Activated CD4-positive, alpha-beta T cell treated with anti-CD3 and anti-CD28 coated beads for 36 hours (primary cell): ENCODE measurements at regions of chr9 and their contacts with region 1.

Region 1: GRCh38 chr9:35882263-35882848 is 12.2 kb upstream of the OR13J1 start:
- DNase-seq: peak; percentile 89
- ATAC-seq: peak; percentile 77
- H3K4me3 Mint-ChIP-seq: no peak overlapping the region
- H3K27ac Mint-ChIP-seq: no peak overlapping the region
- H3K4me1 Mint-ChIP-seq: no peaks in the 10 kb centered on the region
- H3K27me3 Mint-ChIP-seq: peaks cover 4% of the 10 kb centered on the region

Region 2: DNA sequence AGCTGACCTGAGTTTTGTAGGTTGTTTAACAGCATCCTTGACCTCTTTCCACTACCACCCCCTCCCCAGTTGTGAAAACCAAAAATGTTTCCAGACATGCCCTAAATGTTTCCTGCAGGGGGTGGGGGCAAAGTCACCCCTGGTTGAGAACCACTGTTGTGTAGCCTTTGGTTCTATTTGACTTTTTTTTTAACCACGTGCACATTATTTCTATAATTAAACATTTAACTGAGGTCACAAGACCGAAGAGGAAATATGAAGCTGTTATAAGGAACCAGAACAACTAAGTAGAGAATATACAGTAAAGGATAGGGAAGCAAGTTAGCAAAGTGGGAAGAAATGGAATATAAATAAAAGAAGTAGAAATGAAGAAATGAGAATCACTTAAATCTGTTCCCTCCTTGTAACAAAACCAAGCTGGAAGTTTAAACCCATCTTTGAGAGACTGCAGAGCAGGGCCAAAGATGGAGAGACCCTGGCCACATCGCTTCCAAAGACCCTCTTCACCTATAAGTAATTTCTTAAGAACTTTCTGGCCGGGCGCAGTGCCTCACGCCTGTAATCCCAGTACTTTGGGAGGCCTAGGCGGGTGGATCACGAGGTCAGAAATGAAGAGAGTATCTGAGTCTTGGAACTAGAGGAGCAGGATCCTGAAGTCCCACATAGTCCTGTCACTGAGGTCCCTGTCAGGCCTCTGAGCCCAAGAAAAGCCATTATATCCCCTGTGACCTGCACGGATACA is 246.1 kb before region 1 on chr9:
- CTCF ChIA-PET with region 1: no interaction called
- POLR2A ChIA-PET with region 1: no interaction called
- intact Hi-C with region 1: no loop called
- DNase-seq: no peak
- ATAC-seq: no peak
- H3K4me3 Mint-ChIP-seq: no peak overlapping the region
- H3K27ac Mint-ChIP-seq: no peak overlapping the region
- H3K4me1 Mint-ChIP-seq: peaks cover 47% of the 10 kb centered on the region
- H3K27me3 Mint-ChIP-seq: no peaks in the 10 kb centered on the region

Region 3: GRCh38 chr9:35680331-35681105 is 201.8 kb before region 1 on chr9:
- CTCF ChIA-PET with region 1: no interaction called
- POLR2A ChIA-PET with region 1: no interaction called
- intact Hi-C with region 1: no loop called
- DNase-seq: no peak
- ATAC-seq: no peak
- H3K4me3 Mint-ChIP-seq: no peak overlapping the region
- H3K27ac Mint-ChIP-seq: no peak overlapping the region
- H3K4me1 Mint-ChIP-seq: peaks cover 6% of the 10 kb centered on the region
- H3K27me3 Mint-ChIP-seq: peaks cover 4% of the 10 kb centered on the region

Region 4: DNA sequence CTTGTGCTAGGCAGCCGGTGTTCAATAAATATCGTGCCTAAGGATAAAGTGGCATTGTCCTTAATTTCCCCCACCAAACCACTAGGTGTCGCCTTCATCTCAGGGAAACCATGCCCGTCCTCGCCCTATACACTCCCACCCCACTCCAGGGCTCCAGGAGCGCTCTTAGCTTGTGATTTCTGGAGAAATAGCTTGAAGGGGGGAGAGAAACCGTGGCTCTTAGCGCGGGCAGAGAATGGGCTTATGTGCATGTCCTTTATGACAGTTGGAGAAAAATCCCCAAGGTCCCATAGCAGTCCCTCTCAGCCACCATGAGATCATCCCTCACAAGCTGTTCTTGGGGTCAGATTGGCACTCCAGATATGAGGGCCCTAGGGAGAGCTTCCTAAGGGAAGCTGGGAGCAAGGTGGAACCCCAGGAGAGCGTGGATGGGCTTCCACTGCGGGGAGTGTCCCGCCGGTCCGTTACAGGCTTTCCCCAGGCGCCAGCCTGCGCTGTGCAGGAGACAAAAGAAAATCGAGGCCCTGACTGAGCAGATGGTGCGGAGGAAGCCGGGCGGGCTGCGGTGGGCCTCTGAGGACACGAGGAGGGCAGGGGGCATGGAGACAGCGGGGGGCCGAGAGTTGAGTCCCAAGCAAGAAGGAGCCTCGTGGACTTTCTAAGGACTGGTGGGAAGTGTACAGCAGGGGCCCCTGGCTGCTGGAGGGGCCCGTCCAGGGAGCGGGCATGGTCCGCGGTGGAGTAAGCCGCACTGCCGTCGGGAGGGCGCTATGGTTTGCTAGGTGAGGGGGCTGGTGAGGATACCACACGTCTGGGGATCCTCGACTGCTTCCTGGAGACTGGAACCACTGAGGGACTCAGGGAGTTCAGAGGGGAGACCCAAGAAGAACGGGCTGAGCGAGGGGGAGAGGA is 91.7 kb before region 1 on chr9:
- CTCF ChIA-PET with region 1: interaction called, 50 read pairs
- POLR2A ChIA-PET with region 1: no interaction called
- intact Hi-C with region 1: loop called (anchors 1 kb)
- DNase-seq: peak; percentile 67
- ATAC-seq: peak; percentile 94
- H3K4me3 Mint-ChIP-seq: no peak overlapping the region
- H3K27ac Mint-ChIP-seq: no peak overlapping the region
- H3K4me1 Mint-ChIP-seq: peaks cover 3% of the 10 kb centered on the region
- H3K27me3 Mint-ChIP-seq: no peaks in the 10 kb centered on the region

Region 5: DNA sequence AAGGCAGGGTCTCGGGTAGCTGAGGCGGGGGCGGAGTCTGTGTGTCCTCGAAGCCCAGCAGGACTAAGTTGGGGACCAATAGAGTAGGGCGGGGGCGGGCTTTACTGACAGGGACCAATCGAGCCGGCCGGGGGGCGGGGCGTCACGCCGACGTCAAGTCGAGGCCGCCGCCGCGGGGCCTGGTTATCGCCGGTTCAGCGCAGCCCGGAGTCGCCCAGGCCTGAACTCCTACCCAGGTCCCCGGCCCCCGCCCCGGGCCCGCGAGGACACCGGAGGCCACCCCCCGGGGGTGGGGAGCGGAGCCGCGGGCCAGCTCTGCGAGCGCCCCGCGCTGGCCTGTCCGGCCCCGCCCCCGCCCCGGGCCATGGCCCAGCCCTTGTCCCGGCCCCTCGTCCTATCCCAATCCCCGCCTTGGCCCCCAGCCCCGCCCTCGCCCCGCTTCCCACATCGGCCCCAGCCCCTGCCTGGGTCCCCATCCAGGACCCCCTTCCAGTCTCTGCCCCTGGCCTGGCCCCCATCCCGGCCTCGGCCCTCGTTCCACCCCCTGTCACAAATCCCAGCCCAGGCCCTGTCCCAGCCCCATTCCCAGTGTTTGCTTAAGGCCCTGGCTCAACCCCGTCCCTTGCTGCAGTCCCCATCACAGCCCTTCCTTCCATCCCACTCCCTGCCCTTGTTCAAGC is 53.1 kb before region 1 on chr9 and contains the start of gene TMEM8B:
- CTCF ChIA-PET with region 1: interaction called, 27 read pairs
- POLR2A ChIA-PET with region 1: no interaction called
- intact Hi-C with region 1: loop called (anchors 1 kb)
- DNase-seq: peak; percentile 98
- ATAC-seq: peak; percentile 92
- H3K4me3 Mint-ChIP-seq: peak within 1 kb of the TSS; percentile 78
- H3K27ac Mint-ChIP-seq: peak within 1 kb of the TSS; percentile 78
- H3K4me1 Mint-ChIP-seq: peaks cover 13% of the 10 kb centered on the region
- H3K27me3 Mint-ChIP-seq: no peaks in the 10 kb centered on the region
- total RNA-seq, gene TMEM8B: 5.8 to 6.9 TPM

Region 6: GRCh38 chr9:35835216-35835632 is 47.1 kb before region 1 on chr9:
- CTCF ChIA-PET with region 1: interaction called, 23 read pairs
- POLR2A ChIA-PET with region 1: no interaction called
- intact Hi-C with region 1: no loop called
- DNase-seq: peak; percentile 42
- ATAC-seq: peak; percentile 66
- H3K4me3 Mint-ChIP-seq: no peak overlapping the region
- H3K27ac Mint-ChIP-seq: no peak overlapping the region
- H3K4me1 Mint-ChIP-seq: no peaks in the 10 kb centered on the region
- H3K27me3 Mint-ChIP-seq: no peaks in the 10 kb centered on the region

Region 7: GRCh38 chr9:35852876-35853865 is 29.2 kb before region 1 on chr9:
- CTCF ChIA-PET with region 1: interaction called, 10 read pairs
- POLR2A ChIA-PET with region 1: no interaction called
- intact Hi-C with region 1: no loop called
- DNase-seq: no peak
- ATAC-seq: no peak
- H3K4me3 Mint-ChIP-seq: no peak overlapping the region
- H3K27ac Mint-ChIP-seq: no peak overlapping the region
- H3K4me1 Mint-ChIP-seq: peaks cover 3% of the 10 kb centered on the region
- H3K27me3 Mint-ChIP-seq: no peaks in the 10 kb centered on the region

Region 8: GRCh38 chr9:35903049-35903448 is 20.7 kb after region 1 on chr9:
- CTCF ChIA-PET with region 1: interaction called, 15 read pairs
- POLR2A ChIA-PET with region 1: no interaction called
- intact Hi-C with region 1: no loop called
- DNase-seq: peak; percentile 52
- ATAC-seq: peak; percentile 71
- H3K4me3 Mint-ChIP-seq: no peak overlapping the region
- H3K27ac Mint-ChIP-seq: no peak overlapping the region
- H3K4me1 Mint-ChIP-seq: peaks cover 21% of the 10 kb centered on the region
- H3K27me3 Mint-ChIP-seq: no peaks in the 10 kb centered on the region

Region 9: GRCh38 chr9:35910613-35911359 is 28.4 kb after region 1 on chr9:
- CTCF ChIA-PET with region 1: interaction called, 10 read pairs
- POLR2A ChIA-PET with region 1: no interaction called
- intact Hi-C with region 1: no loop called
- DNase-seq: peak; percentile 71
- ATAC-seq: peak; percentile 75
- H3K4me3 Mint-ChIP-seq: no peak overlapping the region
- H3K27ac Mint-ChIP-seq: peak overlapping the region; percentile 80
- H3K4me1 Mint-ChIP-seq: peaks cover 55% of the 10 kb centered on the region
- H3K27me3 Mint-ChIP-seq: no peaks in the 10 kb centered on the region

Region 10: GRCh38 chr9:36250079-36250478 is 367.7 kb after region 1 on chr9:
- CTCF ChIA-PET with region 1: no interaction called
- POLR2A ChIA-PET with region 1: no interaction called
- intact Hi-C with region 1: no loop called
- DNase-seq: no peak
- ATAC-seq: no peak
- H3K4me3 Mint-ChIP-seq: no peak overlapping the region
- H3K27ac Mint-ChIP-seq: no peak overlapping the region
- H3K4me1 Mint-ChIP-seq: peaks cover 22% of the 10 kb centered on the region
- H3K27me3 Mint-ChIP-seq: no peaks in the 10 kb centered on the region